ENCODE measurements at regions of chr12 and their contacts with region 1.

Region 1: GRCh38 chr12:2076196-2076570 is 23.4 kb downstream of the CACNA1C start:
- DNase-seq: no peak
- ATAC-seq: peak; percentile 14 to 62 (median 38)
- H3K4me3 ChIP-seq: peak overlapping the region in 2 of 10 donors; percentile 1 to 17
- H3K27ac ChIP-seq: peak overlapping the region; percentile 82 to 93 (median 88)
- H3K4me1 ChIP-seq: peaks cover 10 to 64% (median 38%) of the 10 kb centered on the region in 9 donors
- H3K27me3 ChIP-seq: no peaks in the 10 kb centered on the region
- CTCF ChIP-seq: no peak

Region 2: DNA sequence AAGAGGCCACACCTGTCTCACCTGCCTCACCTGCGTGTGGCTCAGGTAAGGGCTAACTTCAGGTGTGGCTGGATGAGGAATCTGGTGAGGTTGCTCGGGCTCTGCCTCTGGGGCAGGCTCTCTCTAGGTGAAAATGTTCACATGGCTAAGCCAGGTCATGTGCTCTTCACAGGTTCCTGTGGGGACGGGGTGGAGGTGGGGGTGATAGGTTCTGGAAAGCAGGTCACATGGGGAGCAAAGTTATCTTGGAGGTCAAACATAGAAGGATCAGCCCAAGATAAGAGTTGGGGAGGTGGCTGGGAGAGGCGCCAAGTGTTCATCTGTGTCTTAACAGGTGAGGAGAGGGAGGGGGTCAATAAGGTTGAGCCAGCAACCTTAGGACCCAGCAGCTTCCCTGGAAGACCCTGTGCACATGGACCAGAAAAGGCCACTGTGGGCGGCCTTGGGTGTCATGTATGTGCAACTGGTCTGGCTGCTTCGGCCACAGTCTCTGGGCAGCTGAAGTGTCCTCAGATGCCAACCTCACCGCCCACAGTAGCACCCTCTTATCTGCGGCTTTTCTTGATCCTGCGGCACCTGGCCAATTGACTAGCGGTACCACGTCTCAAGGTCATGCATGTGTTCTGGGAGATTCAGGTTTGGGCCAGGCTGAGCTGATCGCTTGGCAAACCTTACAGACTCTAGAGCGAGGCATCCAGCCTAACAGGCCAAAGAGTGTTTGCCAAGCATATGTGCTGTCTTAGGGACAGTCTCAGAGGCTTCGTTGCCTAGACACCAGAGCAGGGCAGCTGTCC is 37.1 kb after region 1 on chr12:
- intact Hi-C with region 1: loop called in 2 of 10 experiments (anchors 5 kb)
- DNase-seq: peak; percentile 64 to 75
- ATAC-seq: peak; percentile 46 to 85 (median 69)
- H3K4me3 ChIP-seq: no peak overlapping the region
- H3K27ac ChIP-seq: peak overlapping the region; percentile 37 to 84 (median 79)
- H3K4me1 ChIP-seq: peaks cover 21 to 99% (median 66%) of the 10 kb centered on the region in 9 donors
- H3K27me3 ChIP-seq: no peaks in the 10 kb centered on the region
- CTCF ChIP-seq: no peak

Region 3: GRCh38 chr12:2154050-2154449 is 77.9 kb after region 1 on chr12:
- intact Hi-C with region 1: loop called in 2 of 10 experiments (anchors 5 to 10 kb)
- DNase-seq: peak in 1 of 2 donors; percentile 36
- ATAC-seq: peak; percentile 18 to 70 (median 43)
- H3K4me3 ChIP-seq: no peak overlapping the region
- H3K27ac ChIP-seq: peak overlapping the region in 9 of 10 donors; percentile 41 to 79 (median 72)
- H3K4me1 ChIP-seq: peaks cover 29 to 92% (median 67%) of the 10 kb centered on the region in 9 donors
- H3K27me3 ChIP-seq: no peaks in the 10 kb centered on the region
- CTCF ChIP-seq: no peak

Region 4: GRCh38 chr12:2336409-2336829 is 260.2 kb after region 1 on chr12:
- intact Hi-C with region 1: loop called in 1 of 10 experiments (anchors 5 kb)
- DNase-seq: peak in 1 of 2 donors; percentile 56
- ATAC-seq: peak; percentile 78 to 92 (median 87)
- H3K4me3 ChIP-seq: peak overlapping the region in 1 of 10 donors; percentile 5
- H3K27ac ChIP-seq: peak overlapping the region; percentile 67 to 92 (median 88)
- H3K4me1 ChIP-seq: peaks cover 3 to 97% (median 80%) of the 10 kb centered on the region in 9 donors
- H3K27me3 ChIP-seq: no peaks in the 10 kb centered on the region
- CTCF ChIP-seq: no peak